Activated CD4-positive, alpha-beta T cell treated with anti-CD3 and anti-CD28 coated beads, Interleukin-2, amount 10 ng/mL, durations not matched to agents 24 days and 14 days (primary cell): ENCODE measurements at regions of chr14 and their contacts with region 1.

Region 1: GRCh38 chr14:50520947-50521815 is 11.2 kb downstream of the MAP4K5 start:
- DNase-seq: peak; percentile 77
- H3K4me3 Mint-ChIP-seq: peak overlapping the region; percentile 67
- H3K27ac Mint-ChIP-seq: peak overlapping the region; percentile 94
- H3K4me1 Mint-ChIP-seq: peaks cover 39% of the 10 kb centered on the region
- H3K27me3 Mint-ChIP-seq: no peaks in the 10 kb centered on the region

Region 2: GRCh38 chr14:50342221-50343078 is 178.7 kb before region 1 on chr14:
- intact Hi-C with region 1: loop called (anchors 1 kb)
- DNase-seq: peak; percentile 77
- H3K4me3 Mint-ChIP-seq: no peak overlapping the region
- H3K27ac Mint-ChIP-seq: peak overlapping the region; percentile 23
- H3K4me1 Mint-ChIP-seq: peaks cover 24% of the 10 kb centered on the region
- H3K27me3 Mint-ChIP-seq: peaks cover 14% of the 10 kb centered on the region

Region 3: GRCh38 chr14:50396631-50397390 is 124.4 kb before region 1 on chr14 and contains the start of gene CDKL1:
- intact Hi-C with region 1: loop called (anchors 1 kb)
- DNase-seq: peak; percentile 84
- H3K4me3 Mint-ChIP-seq: peak within 1 kb of the TSS; percentile 88
- H3K27ac Mint-ChIP-seq: peak within 1 kb of the TSS; percentile 88
- H3K4me1 Mint-ChIP-seq: peaks cover 16% of the 10 kb centered on the region
- H3K27me3 Mint-ChIP-seq: peaks cover 20% of the 10 kb centered on the region
- total RNA-seq, gene CDKL1: 4.8 and 5.7 TPM in 2 replicates

Region 4: GRCh38 chr14:50619556-50620141 is 98.5 kb after region 1 on chr14:
- intact Hi-C with region 1: no loop called
- DNase-seq: peak; percentile 63
- H3K4me3 Mint-ChIP-seq: no peak overlapping the region
- H3K27ac Mint-ChIP-seq: no peak overlapping the region
- H3K4me1 Mint-ChIP-seq: no peaks in the 10 kb centered on the region
- H3K27me3 Mint-ChIP-seq: peaks cover 2% of the 10 kb centered on the region

Region 5: DNA sequence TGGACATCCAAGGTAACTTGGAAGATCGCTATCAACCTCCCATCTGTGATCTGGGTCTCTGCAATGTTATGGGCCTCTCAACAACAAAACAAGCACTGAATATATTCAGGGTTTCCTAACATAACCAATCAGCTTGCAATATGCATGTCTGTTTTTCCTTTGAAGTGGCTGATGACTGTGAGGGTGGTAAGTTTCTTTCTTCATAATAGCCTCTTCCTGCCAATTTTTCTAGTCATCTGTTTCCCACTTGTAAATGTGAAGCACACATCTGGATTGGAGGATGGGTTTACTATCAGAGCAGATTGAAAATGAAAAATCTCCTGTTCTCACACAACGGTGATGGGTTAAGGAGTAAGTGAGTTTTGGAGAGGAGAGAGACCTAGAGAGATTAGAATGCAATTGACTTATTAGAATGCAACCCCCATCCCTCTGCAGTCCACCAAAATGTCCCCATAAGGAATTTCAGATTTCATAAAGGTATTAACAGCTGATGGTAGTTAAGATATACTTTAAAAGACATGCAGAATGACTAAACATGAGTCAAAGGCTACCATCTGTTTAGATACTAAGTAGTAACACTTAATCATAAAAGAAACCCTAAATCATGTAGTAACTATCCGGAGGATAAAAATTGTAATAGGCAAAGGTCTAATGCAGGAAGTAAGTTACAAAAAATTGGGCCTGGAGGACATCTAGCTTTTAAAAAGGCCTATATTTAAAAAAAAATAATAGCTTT is 205.4 kb after region 1 on chr14:
- intact Hi-C with region 1: loop called (anchors 1 kb)
- DNase-seq: peak; percentile 84
- H3K4me3 Mint-ChIP-seq: peak overlapping the region; percentile 51
- H3K27ac Mint-ChIP-seq: peak overlapping the region; percentile 88
- H3K4me1 Mint-ChIP-seq: peaks cover 24% of the 10 kb centered on the region
- H3K27me3 Mint-ChIP-seq: no peaks in the 10 kb centered on the region